ENCODE measurements at regions of chr1 and their contacts with region 1.

Region 1: DNA sequence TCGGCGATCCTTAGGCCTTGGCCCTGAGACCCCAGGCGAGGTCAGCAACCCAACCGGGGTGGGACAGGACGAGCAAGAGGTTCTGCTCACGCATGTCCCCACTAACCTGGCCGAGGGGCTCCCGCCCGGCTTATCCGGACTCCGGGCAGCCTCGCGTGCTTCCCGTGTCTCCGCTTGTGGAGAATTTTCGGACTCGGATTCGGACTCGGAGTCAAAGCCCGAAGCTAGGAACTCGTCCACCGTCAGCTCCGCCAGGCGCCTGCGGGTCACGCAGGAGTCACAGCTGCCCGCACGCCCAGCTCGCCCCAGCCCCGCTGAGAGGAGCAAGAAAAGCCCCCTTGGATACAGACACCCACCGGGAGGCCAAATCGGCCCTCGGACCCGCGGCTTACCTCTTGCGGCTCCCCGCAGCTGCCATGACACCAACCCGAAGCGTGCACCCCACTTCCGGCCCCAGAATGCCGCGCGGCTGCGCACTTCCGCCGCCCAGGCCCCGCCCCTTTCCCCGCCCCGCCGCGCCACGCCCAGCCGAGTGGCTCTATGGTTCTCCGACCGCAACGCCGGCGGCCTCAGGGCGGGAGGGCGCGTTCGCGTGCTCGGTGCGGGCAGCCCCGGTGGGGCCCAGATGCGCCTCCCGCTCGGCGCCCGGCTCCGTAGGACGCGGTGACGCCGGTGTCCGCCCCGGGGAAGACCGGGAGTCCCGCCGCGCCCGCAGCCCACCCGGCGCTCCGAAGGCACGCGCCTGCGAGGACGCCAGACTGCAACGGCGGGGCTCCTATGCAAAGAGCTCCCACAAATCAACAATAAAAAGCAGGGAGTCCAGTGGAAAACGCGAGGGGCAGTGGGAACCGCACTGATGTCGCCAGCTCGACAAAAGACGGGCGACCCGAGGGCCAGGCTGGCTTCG is at the start of gene NOC2L:
- DNase-seq: peak; percentile 93 to 98 (median 97)
- ATAC-seq: peak; percentile 91 to 92
- H3K4me3 ChIP-seq: peak within 1 kb of the TSS; percentile 92
- H3K27ac ChIP-seq: no peak within 1 kb of the TSS
- H3K4me1 ChIP-seq: no peaks in the 10 kb centered on the region
- H3K27me3 ChIP-seq: no peaks in the 10 kb centered on the region
- total RNA-seq, gene NOC2L: 43.6 to 48.6 (median 45.5) TPM

Region 2: GRCh38 chr1:904310-904950 is 54.6 kb before region 1 on chr1:
- intact Hi-C with region 1: loop called in 1 of 4 experiments (anchors 10 kb)
- DNase-seq: peak; percentile 80 to 95 (median 94)
- ATAC-seq: peak; percentile 76 to 84
- H3K4me3 ChIP-seq: peak overlapping the region; percentile 21
- H3K27ac ChIP-seq: no peak overlapping the region
- H3K4me1 ChIP-seq: peaks cover 4% of the 10 kb centered on the region
- H3K27me3 ChIP-seq: no peaks in the 10 kb centered on the region

Region 3: GRCh38 chr1:1091663-1092478 is 132.8 kb after region 1 on chr1:
- intact Hi-C with region 1: no loop called
- DNase-seq: peak in 2 of 3 donors; percentile 48 to 67
- ATAC-seq: peak in 1 of 2 donors; percentile 5
- H3K4me3 ChIP-seq: no peak overlapping the region
- H3K27ac ChIP-seq: no peak overlapping the region
- H3K4me1 ChIP-seq: no peaks in the 10 kb centered on the region
- H3K27me3 ChIP-seq: no peaks in the 10 kb centered on the region